HCT116 (cell line): ENCODE measurements at regions of chr17 and their contacts with region 1.

Region 1: DNA sequence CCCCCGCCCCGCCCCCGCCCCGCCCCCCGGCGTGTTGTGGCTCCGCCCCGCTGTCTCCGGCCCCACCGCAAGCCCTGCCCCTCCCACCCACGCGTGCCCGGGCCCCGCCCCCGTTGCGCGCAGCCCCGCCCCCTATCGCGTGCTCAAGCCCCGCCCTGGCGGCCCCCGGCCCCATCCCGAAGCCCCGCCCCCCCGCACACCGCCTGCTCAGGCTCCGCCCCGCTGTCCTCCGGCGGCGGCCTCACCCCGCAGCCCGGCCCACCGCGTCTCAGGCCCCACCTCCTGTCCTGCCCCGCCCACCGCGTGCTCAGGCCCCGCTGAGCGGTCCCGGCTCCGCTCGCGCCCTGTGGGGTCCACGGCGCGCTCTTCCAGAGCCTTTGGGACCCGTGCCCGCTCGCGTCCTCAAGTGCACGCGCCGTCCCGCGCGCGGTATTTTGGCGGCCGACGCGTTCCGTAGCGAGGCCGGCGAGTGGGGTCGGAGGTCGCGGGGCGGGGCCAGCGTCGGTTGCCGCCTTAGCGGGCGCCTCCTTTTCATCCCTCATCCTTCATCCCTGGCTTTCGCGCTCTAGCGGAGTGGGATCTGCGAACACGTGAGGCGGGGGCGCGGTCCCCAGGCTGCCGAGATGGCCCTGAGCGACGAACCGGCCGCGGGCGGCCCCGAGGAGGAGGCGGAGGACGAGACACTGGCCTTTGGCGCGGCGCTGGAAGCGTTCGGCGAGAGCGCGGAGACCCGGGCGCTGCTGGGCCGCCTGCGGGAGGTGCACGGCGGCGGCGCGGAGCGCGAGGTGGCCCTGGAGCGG is at the start of gene TBCD:
- DNase-seq: peak; percentile 82
- ATAC-seq: peak; percentile 82
- H3K4me3 ChIP-seq: peak within 1 kb of the TSS; percentile 96 to 99
- H3K27ac ChIP-seq: peak within 1 kb of the TSS; percentile 94
- H3K4me1 ChIP-seq: peaks cover 18 to 35% of the 10 kb centered on the region in 2 experiments
- H3K27me3 ChIP-seq: no peaks in the 10 kb centered on the region
- CTCF ChIP-seq: no peak
- POLR2A ChIP-seq: peak; percentile 33
- RAD21 ChIP-seq: no peak
- total RNA-seq, gene TBCD: 152 TPM

Region 2: GRCh38 chr17:82450170-82451106 is 301.3 kb before region 1 on chr17 and contains the start of gene CYBC1:
- CTCF ChIA-PET with region 1: no interaction called
- POLR2A ChIA-PET with region 1: no interaction called
- RAD21 ChIA-PET with region 1: no interaction called
- intact Hi-C with region 1: loop called (anchors 5 kb)
- DNase-seq: peak; percentile 80
- ATAC-seq: peak; percentile 95
- H3K4me3 ChIP-seq: peak within 1 kb of the TSS; percentile 70 to 100
- H3K27ac ChIP-seq: peak within 1 kb of the TSS; percentile 81
- H3K4me1 ChIP-seq: peaks cover 9 to 19% of the 10 kb centered on the region in 2 experiments
- H3K27me3 ChIP-seq: no peaks in the 10 kb centered on the region
- CTCF ChIP-seq: no peak
- POLR2A ChIP-seq: peak; percentile 76
- RAD21 ChIP-seq: no peak
- total RNA-seq, gene CYBC1: 95.4 TPM

Region 3: GRCh38 chr17:82568997-82569393 is 182.8 kb before region 1 on chr17:
- CTCF ChIA-PET with region 1: no interaction called
- POLR2A ChIA-PET with region 1: no interaction called
- RAD21 ChIA-PET with region 1: no interaction called
- intact Hi-C with region 1: no loop called
- DNase-seq: no peak
- ATAC-seq: no peak
- H3K4me3 ChIP-seq: no peak overlapping the region
- H3K27ac ChIP-seq: no peak overlapping the region
- H3K4me1 ChIP-seq: peaks cover 9 to 10% of the 10 kb centered on the region in 2 experiments; a peak in 2 of 4 replicates
- H3K27me3 ChIP-seq: no peaks in the 10 kb centered on the region
- CTCF ChIP-seq: no peak
- POLR2A ChIP-seq: no peak
- RAD21 ChIP-seq: no peak

Region 4: DNA sequence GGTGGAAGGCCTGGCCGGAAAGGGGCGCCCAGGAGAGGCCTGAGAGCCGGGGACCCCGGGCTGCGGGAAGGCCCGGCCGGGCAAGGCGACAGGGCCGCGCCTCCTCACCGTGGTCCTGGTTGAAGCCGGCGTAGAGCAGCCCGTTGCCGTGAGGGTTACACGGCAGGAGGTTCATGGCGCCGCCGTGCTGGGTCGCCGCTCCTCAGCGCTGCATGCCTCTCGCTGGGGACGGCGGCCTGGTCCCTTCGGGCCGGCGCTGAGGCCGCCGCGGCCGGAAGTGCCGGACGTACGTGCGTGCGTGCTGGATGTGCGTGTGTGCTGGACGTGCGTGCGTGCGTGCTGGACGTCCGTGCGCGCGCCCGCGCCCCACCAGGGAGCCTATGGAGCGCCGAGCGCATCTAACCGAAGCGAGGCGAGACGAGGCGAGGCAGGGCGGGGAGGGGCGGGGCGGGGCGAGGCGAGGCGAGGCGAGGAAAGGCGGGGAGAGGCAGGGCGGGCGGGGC is 103.6 kb before region 1 on chr17 and contains the start of gene WDR45B:
- CTCF ChIA-PET with region 1: no interaction called
- POLR2A ChIA-PET with region 1: no interaction called
- RAD21 ChIA-PET with region 1: interaction called in 1 of 2 experiments, 4 read pairs
- intact Hi-C with region 1: loop called (anchors 2 kb)
- DNase-seq: peak; percentile 94
- ATAC-seq: peak; percentile 95
- H3K4me3 ChIP-seq: peak within 1 kb of the TSS; percentile 91 to 100
- H3K27ac ChIP-seq: peak within 1 kb of the TSS; percentile 86
- H3K4me1 ChIP-seq: peaks cover 11 to 27% of the 10 kb centered on the region in 2 experiments
- H3K27me3 ChIP-seq: no peaks in the 10 kb centered on the region
- CTCF ChIP-seq: no peak
- POLR2A ChIP-seq: peak; percentile 83
- RAD21 ChIP-seq: no peak
- total RNA-seq, gene WDR45B: 117 TPM

Region 5: GRCh38 chr17:82716203-82717010 is 35.4 kb before region 1 on chr17 and contains the start of gene FN3KRP:
- CTCF ChIA-PET with region 1: no interaction called
- POLR2A ChIA-PET with region 1: interaction called, 6 read pairs
- RAD21 ChIA-PET with region 1: no interaction called
- intact Hi-C with region 1: loop called (anchors 5 kb)
- DNase-seq: peak; percentile 89
- ATAC-seq: peak; percentile 90
- H3K4me3 ChIP-seq: peak within 1 kb of the TSS; percentile 72 to 100
- H3K27ac ChIP-seq: peak within 1 kb of the TSS; percentile 63
- H3K4me1 ChIP-seq: peaks cover 7 to 12% of the 10 kb centered on the region in 2 experiments; a peak in 3 of 4 replicates
- H3K27me3 ChIP-seq: no peaks in the 10 kb centered on the region
- CTCF ChIP-seq: no peak
- POLR2A ChIP-seq: peak; percentile 34
- RAD21 ChIP-seq: no peak
- total RNA-seq, gene FN3KRP: 35.2 TPM